Panc1 (cell line): ENCODE measurements at regions of chr5 and their contacts with region 1.

Region 1: DNA sequence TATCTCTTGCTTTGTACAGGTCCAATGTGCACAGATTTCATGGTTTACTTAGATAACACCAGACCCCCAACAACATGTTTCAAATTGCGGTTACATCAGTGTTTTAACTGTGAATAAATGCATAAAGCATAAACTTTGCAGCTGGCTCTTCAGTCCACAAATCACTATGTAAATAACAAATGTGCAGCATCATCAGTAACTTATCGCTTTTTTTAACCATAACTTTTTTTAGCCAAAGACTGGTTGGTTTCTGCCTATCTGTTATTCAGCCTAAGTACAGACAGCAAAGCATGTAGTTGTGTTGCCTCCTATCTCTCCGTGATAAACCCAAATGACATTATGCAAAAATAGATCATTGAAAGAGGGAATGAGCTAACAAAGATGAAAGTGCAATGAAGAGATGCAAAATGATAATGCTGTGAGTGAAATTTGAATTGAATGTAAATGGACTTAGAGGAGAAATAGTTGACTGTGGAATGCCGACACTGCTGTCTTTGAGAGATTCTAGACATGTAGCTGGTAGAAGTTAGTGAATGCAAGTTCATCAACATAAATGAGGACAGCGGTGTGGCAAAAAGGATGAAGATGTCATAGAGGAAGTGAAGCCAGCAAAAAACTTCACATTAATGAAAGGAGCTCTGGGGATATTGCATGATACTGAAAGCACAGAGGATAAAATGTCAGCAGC is 108.8 kb downstream of the PDE8B start:
- DNase-seq: no peak
- ATAC-seq: no peak
- H3K4me3 ChIP-seq: no peak overlapping the region
- H3K27ac ChIP-seq: no peak overlapping the region
- H3K4me1 ChIP-seq: no peaks in the 10 kb centered on the region
- H3K27me3 ChIP-seq: peaks cover 11% of the 10 kb centered on the region
- CTCF ChIP-seq: no peak

Region 2: GRCh38 chr5:76351577-76351976 is 967.7 kb before region 1 on chr5:
- CTCF ChIA-PET with region 1: no interaction called
- POLR2A ChIA-PET with region 1: no interaction called
- in situ Hi-C with region 1: no loop called
- intact Hi-C with region 1: no loop called
- DNase-seq: no peak
- ATAC-seq: no peak
- H3K4me3 ChIP-seq: no peak overlapping the region
- H3K27ac ChIP-seq: no peak overlapping the region
- H3K4me1 ChIP-seq: no peaks in the 10 kb centered on the region
- H3K27me3 ChIP-seq: peaks cover 4% of the 10 kb centered on the region; the same call in 1 of the 2 replicates
- CTCF ChIP-seq: no peak

Region 3: DNA sequence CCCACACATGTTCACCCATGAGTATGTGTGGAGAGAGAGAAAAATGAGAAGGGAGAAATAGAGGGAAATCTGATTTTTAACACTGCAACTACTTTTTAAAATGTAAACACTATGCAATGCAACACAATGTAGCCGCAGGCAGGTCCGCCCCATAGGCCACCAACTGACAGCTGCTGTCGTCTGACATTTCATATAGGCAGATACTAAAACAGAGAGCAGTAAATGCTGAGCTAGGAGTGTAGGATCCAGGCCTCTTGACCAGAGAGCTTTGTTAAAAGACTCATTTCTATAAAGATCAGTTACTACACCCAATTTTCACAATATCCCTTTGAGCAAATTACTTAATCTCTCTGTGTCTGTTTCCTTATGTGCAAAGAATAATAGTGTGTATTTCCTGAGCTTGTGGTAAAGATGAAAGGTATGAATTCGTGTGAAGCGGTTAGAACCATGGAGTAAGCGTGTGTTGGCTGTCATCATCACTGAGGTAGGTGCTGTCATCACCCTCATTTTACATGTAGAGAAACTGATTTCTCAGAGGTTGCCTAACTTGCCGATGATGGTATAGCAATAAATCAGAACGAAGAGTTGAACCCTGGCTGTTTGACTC is 164.0 kb before region 1 on chr5:
- CTCF ChIA-PET with region 1: no interaction called
- POLR2A ChIA-PET with region 1: no interaction called
- in situ Hi-C with region 1: no loop called
- intact Hi-C with region 1: no loop called
- DNase-seq: no peak
- ATAC-seq: no peak
- H3K4me3 ChIP-seq: no peak overlapping the region
- H3K27ac ChIP-seq: no peak overlapping the region
- H3K4me1 ChIP-seq: no peaks in the 10 kb centered on the region
- H3K27me3 ChIP-seq: no peaks in the 10 kb centered on the region
- CTCF ChIP-seq: no peak

Region 4: GRCh38 chr5:77463905-77464304 is 144.6 kb after region 1 on chr5:
- CTCF ChIA-PET with region 1: no interaction called
- POLR2A ChIA-PET with region 1: interaction called, 12 read pairs
- in situ Hi-C with region 1: no loop called
- intact Hi-C with region 1: no loop called
- DNase-seq: no peak
- ATAC-seq: no peak
- H3K4me3 ChIP-seq: no peak overlapping the region
- H3K27ac ChIP-seq: no peak overlapping the region
- H3K4me1 ChIP-seq: no peaks in the 10 kb centered on the region
- H3K27me3 ChIP-seq: no peaks in the 10 kb centered on the region
- CTCF ChIP-seq: no peak